ENCODE measurements at regions of chr17 and their contacts with region 1.

Region 1: DNA sequence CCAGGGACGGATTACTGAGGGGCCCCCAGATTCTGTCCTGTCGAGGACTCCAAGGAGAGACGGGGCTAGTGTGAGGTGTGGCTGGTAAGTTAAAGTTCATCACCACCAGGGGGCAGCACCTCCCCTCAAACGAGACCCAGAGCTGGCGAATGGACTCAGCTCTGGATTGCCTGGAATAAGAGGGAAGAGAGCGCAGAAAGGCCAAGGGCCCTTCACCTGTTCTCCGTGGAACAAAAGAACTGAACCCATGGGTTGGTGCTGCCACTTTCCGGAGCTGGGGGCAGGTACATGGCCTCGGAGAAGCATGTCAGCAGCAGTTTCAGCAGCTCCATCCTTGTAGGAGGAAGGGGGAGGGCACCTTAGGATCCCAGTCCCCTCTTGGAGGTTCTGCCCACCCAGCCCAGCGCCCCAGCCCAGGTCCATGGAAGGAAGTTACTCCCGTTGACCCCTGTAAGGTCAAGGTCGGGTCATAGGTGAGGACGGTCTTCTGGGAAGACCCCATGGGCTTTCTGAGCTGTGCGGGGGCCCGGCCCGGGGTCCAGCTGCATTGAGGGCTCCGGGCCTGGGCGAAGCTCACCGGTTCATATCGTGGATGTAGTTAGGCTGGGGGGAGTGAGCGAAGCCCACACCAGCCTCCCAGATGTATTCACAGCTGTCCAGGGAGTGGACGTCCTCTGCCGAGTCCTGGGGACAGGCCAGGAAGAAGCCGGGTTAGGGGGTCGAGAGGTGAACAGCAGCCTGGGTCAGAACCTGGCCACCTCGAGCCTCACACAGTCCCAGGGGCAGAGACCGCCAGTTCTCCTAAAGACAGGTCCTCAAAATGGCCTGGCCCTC is 10.7 kb downstream of the HID1 start:
- DNase-seq: peak; percentile 89
- ATAC-seq: peak; percentile 78
- H3K4me3 Mint-ChIP-seq: no peak overlapping the region
- H3K27ac Mint-ChIP-seq: no peak overlapping the region
- H3K4me1 Mint-ChIP-seq: peaks cover 10% of the 10 kb centered on the region
- H3K27me3 Mint-ChIP-seq: peaks cover 2% of the 10 kb centered on the region

Region 2: DNA sequence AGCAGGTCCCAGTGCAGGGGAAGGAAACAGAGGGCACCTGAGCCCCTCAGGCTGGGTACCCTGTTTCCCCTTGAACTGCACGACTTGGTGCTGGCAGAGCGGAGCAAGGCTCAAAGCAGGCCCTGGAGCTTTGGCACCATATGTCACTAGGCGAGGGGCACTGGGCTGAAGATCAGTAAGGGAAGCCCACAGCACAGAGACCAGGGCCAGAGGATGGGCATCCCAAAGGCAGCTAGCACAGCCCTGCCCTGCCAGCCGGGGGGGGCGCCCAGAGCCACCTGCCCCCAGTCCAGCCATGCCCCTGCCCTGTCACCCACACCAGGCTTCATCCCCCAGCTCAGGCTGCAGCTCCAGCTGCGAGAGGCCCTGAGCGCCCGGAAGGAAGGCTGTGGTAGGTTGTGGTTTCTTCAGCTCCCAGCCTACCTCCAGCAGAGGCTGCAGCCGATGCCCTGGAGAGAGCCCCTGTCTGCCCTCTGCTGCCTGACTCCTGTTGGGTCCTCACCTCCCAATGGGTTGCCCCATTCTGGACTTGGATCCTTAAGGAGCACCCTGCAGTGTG is 202.6 kb before region 1 on chr17:
- CTCF ChIA-PET with region 1: no interaction called
- POLR2A ChIA-PET with region 1: no interaction called
- DNase-seq: peak; percentile 82
- ATAC-seq: peak; percentile 90
- H3K4me3 Mint-ChIP-seq: peak overlapping the region; percentile 69
- H3K27ac Mint-ChIP-seq: peak overlapping the region; percentile 91
- H3K4me1 Mint-ChIP-seq: peaks cover 70% of the 10 kb centered on the region
- H3K27me3 Mint-ChIP-seq: no peaks in the 10 kb centered on the region

Region 3: DNA sequence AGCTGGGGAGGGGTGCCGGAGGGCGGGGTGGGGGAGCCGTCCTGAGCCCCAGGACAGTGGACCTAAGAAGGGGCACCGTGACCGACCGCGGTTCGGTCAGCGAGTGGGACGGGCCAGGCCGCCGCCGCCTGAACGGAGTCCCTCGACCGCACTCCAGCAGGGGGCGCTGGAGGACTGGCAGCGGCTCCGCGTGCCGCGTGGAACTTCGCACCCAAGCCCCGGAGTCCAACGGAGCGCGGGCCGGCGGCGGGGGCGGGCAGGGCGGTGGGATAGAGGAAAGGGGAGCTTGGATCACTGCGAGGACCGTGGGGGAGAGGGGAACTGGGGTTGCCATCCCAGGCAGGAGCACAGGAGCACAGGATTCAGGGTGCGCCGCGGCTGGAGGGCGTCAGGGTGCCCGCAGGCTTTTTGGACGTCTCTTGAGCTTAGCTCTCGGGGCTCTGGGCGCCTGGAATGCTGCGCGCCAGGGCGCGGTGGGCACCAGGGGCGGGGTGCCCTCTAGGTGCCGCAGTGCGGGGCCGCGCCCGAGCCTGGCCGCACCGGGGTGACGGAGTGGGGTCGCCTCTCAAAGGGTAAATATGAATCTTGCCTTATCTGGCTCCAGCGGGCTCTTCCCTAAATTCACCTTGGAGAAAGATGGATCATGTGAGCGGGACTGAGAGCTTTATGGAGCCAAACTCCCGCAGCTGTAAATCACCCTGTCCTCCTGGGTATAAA is 38.2 kb before region 1 on chr17:
- CTCF ChIA-PET with region 1: interaction called, 43 read pairs
- POLR2A ChIA-PET with region 1: no interaction called
- DNase-seq: peak; percentile 73
- ATAC-seq: peak; percentile 70
- H3K4me3 Mint-ChIP-seq: no peak overlapping the region
- H3K27ac Mint-ChIP-seq: no peak overlapping the region
- H3K4me1 Mint-ChIP-seq: peaks cover 5% of the 10 kb centered on the region
- H3K27me3 Mint-ChIP-seq: peaks cover 49% of the 10 kb centered on the region

Region 4: DNA sequence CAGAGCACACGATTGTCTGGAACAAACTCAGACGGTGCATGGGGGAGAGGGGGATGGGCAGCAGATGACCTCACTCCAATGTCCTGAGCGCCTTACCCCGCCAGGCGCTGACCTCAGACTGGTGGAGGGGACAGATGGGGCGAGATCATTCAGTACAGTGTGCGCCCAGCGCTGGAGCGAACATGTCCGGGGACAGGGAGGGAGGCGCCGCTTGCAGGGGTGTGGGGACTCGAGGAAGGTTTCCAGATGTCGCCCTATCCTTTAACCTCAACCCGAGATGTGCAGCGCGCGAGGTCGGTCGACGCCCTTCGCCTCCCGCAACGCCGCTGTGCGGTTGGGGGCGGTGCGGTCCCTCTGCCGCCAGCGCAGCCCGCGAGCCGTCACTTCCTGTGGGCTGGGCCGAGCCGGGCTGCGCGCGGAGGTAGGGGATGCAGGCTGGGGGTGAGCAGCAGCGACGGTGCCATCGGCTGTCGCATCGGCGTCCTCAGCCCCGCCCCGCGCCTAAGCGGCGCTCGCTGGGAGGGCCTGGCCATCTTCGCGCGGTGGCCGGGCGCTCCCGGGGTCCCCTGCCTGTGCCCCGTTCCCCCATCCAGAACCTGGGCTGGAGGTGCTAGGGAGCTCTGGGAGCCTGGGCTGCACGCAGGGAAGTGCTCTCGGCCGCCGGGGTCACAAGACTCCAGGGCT is 20.2 kb after region 1 on chr17:
- CTCF ChIA-PET with region 1: interaction called, 82 read pairs
- POLR2A ChIA-PET with region 1: no interaction called
- DNase-seq: peak; percentile 82
- ATAC-seq: peak; percentile 93
- H3K4me3 Mint-ChIP-seq: peak overlapping the region; percentile 74
- H3K27ac Mint-ChIP-seq: peak overlapping the region; percentile 70
- H3K4me1 Mint-ChIP-seq: peaks cover 22% of the 10 kb centered on the region
- H3K27me3 Mint-ChIP-seq: peaks cover 40% of the 10 kb centered on the region

Region 5: GRCh38 chr17:75012346-75013091 is 50.6 kb after region 1 on chr17 and contains the start of gene MRPL58:
- CTCF ChIA-PET with region 1: interaction called, 182 read pairs
- POLR2A ChIA-PET with region 1: interaction called, 11 read pairs
- DNase-seq: peak; percentile 90
- ATAC-seq: peak; percentile 96
- H3K4me3 Mint-ChIP-seq: peak within 1 kb of the TSS; percentile 95
- H3K27ac Mint-ChIP-seq: peak within 1 kb of the TSS; percentile 93
- H3K4me1 Mint-ChIP-seq: peaks cover 15% of the 10 kb centered on the region
- H3K27me3 Mint-ChIP-seq: no peaks in the 10 kb centered on the region
- total RNA-seq, gene MRPL58: 45.1 to 45.8 TPM

Region 6: DNA sequence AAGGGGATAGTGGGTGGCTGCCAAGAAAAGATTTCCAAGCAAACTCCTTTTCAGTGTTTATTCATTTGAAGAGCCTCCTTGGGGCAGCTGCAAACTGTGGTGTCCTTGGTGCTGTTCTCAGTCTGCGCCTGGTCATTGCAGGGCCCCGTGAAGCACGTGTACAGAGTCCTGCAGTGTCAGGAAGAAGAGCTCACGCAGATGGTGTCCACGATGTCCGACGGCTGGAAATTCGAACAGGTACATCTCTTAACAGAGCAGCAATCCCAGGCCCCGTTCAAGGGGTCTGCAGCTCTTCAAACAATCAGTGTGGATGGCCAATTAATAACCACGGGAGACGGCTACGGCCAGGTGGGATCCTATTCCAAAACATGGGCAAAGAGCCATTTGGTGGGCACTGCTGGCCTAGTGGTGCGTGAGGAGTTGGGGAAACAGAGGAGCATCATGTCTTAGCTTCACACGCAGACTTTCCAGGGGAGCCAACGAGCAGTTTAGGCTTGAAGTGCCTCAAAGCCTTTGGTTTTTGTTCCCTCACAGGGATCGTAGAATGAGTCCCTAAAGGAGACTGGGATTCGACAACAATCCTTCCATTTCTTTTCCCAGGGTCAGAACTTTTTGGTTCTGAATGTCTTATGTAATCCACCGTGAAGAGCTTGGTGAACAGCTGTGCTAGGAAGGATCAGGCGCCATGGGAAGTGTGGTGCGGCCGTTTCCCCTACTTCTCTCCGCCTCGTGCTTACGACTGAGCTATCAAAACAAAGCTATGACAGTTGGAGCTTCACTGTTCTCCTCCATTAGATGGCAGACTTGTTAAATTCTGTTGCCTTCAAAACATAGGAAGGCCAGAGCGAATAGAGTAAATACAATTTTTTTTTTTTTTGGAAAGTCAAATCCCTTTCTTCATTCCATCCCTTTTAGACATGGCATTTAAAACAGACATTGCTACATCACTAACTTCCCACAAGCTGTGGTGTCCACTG is 97.8 kb after region 1 on chr17:
- CTCF ChIA-PET with region 1: interaction called, 11 read pairs
- POLR2A ChIA-PET with region 1: no interaction called
- DNase-seq: no peak
- ATAC-seq: no peak
- H3K4me3 Mint-ChIP-seq: no peak overlapping the region
- H3K27ac Mint-ChIP-seq: no peak overlapping the region
- H3K4me1 Mint-ChIP-seq: peaks cover 18% of the 10 kb centered on the region
- H3K27me3 Mint-ChIP-seq: no peaks in the 10 kb centered on the region

Region 7: DNA sequence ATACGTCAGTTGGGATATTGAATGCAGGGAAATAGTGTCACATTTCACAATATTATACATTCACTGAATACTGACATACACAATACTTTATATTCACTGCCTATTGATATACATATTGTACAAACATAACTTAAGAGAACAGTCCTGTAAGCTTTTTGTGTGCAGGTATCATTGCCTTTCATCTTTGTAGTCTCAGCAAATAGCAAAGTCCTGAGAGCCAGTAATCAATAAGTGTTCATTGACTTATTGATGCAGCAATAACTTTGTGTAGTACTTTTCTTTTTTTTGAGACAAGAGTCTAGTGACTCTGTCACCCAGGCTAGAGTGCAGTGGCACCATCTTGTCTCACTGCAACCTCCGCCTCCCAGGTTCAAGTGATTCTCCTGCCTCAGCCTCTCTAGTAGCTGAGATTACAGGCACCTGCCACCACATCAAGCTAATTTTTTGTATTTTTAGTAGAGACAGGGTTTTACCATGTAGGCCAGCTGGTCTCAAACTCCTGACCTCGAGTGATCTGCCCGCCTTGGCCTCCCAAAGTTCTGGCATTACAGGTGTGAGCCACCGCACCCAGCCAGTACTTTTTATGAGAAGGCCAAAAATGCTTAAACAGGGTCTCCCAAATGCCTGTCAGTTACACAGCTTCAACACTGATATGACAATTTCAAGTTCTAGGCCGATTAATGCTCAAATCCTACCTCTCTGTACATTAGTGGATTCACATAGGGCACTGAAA is 238.2 kb after region 1 on chr17:
- CTCF ChIA-PET with region 1: interaction called, 71 read pairs
- POLR2A ChIA-PET with region 1: interaction called, 6 read pairs
- DNase-seq: no peak
- ATAC-seq: no peak
- H3K4me3 Mint-ChIP-seq: no peak overlapping the region
- H3K27ac Mint-ChIP-seq: no peak overlapping the region
- H3K4me1 Mint-ChIP-seq: peaks cover 12% of the 10 kb centered on the region
- H3K27me3 Mint-ChIP-seq: no peaks in the 10 kb centered on the region

Measured in activated CD8-positive, alpha-beta T cell treated with anti-CD3 and anti-CD28 coated beads, Interleukin-2, amount 10 ng/mL, durations not matched to agents 7 days and 5 days (primary cell).